ENCODE measurements at regions of chr17 and their contacts with region 1.

Region 1: DNA sequence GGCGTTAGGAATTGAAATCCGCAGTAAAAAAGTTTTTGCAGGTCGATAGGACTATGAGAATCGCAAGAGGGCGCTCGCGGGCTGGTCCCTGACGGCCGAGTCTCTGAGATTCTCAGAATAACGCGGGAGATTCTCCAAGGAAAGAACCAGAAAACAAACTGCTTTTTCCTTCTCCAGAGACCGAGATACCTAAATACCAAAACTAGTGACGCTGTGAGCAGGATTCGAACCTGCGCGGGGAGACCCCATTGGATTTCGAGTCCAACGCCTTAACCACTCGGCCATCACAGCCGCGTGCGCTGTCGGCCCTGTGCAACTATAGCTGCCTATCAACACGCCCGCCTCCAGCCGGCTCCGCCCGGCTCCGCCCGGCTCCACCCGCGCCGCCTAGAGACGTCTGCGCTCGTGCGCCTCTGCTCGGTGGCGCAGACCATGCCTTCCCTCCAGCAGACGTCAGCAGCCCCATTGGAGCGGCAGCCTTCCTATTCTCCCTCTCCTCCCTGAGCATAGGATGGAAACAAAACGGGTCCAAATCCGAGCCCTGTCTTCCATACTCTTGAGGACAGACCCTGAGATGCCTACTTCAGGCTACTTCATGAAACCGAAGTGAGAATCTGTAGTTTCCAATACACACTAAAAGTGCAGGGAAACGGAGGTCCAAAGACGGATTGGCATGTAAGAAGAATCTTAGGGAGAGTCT is 13.4 kb downstream of the PER1 start:
- DNase-seq: peak; percentile 92 to 93
- H3K4me3 ChIP-seq: peak overlapping the region; percentile 45
- H3K4me3 Mint-ChIP-seq: no peak overlapping the region
- H3K27ac Mint-ChIP-seq: no peak overlapping the region
- H3K4me1 ChIP-seq: peaks cover 4% of the 10 kb centered on the region; the same call in 1 of the 2 replicates
- H3K4me1 Mint-ChIP-seq: no peaks in the 10 kb centered on the region
- H3K27me3 ChIP-seq: no peaks in the 10 kb centered on the region
- H3K27me3 Mint-ChIP-seq: no peaks in the 10 kb centered on the region
- CTCF ChIP-seq: peak; percentile 65 to 73

Region 2: DNA sequence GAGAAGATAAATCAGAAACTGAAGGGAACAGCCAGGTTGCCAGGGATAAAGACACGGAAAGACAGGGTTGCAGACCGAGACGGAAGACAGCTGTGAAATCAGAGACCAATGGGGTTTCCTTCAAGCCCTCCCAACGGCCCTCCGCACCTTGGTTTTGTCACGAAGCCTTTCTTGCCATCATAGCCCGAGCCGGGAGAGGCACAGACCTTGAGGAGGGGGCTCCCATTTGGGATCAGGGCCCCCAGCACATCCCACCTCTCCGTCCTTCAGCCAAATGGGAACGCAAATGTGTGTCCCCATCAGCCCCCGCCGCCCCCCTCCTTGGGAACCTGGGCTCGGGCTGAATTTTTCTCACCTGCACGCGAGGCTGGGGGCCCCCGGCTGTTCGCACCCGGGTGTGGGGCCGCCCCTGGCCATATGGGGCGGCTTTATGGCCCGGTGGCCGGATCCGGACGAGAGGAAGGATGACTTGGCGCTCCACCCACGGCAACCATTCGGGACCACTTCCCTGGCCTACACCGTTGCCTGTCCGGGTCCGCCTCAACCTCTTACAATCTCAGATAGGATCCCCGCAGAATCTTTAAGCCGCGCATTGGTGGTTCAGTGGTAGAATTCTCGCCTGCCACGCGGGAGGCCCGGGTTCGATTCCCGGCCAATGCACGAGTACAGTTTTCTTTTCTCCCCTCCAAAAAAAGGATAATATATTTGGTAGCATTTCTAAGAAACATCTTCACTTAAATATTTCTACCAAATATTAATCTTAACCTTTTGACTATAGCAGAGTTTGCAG is 13.5 kb before region 1 on chr17:
- CTCF ChIA-PET with region 1: interaction called, 3 read pairs
- POLR2A ChIA-PET with region 1: no interaction called
- intact Hi-C with region 1: loop called (anchors 2 kb)
- DNase-seq: peak; percentile 63 to 79
- H3K4me3 ChIP-seq: peak overlapping the region; percentile 54
- H3K4me3 Mint-ChIP-seq: peak overlapping the region; percentile 87
- H3K27ac Mint-ChIP-seq: peak overlapping the region; percentile 64
- H3K4me1 ChIP-seq: no peaks in the 10 kb centered on the region; the same call in 1 of the 2 replicates
- H3K4me1 Mint-ChIP-seq: peaks cover 35% of the 10 kb centered on the region
- H3K27me3 ChIP-seq: no peaks in the 10 kb centered on the region; the same call in 1 of the 2 replicates
- H3K27me3 Mint-ChIP-seq: peaks cover 6% of the 10 kb centered on the region
- CTCF ChIP-seq: no peak

Region 3: GRCh38 chr17:8237175-8237574 is 98.4 kb after region 1 on chr17:
- CTCF ChIA-PET with region 1: no interaction called
- POLR2A ChIA-PET with region 1: no interaction called
- intact Hi-C with region 1: no loop called
- DNase-seq: peak; percentile 28 to 51
- H3K4me3 ChIP-seq: no peak overlapping the region
- H3K4me3 Mint-ChIP-seq: no peak overlapping the region
- H3K27ac Mint-ChIP-seq: no peak overlapping the region
- H3K4me1 ChIP-seq: no peaks in the 10 kb centered on the region
- H3K4me1 Mint-ChIP-seq: no peaks in the 10 kb centered on the region
- H3K27me3 ChIP-seq: no peaks in the 10 kb centered on the region
- H3K27me3 Mint-ChIP-seq: no peaks in the 10 kb centered on the region
- CTCF ChIP-seq: no peak

Measured in Caco-2 (cell line).